Panc1 (cell line): ENCODE measurements at regions of chr12 and their contacts with region 1.

Region 1: GRCh38 chr12:70664465-70664881 is 27.2 kb upstream of the PTPRB start:
- DNase-seq: no peak
- ATAC-seq: no peak
- H3K4me3 ChIP-seq: no peak overlapping the region
- H3K27ac ChIP-seq: no peak overlapping the region
- H3K4me1 ChIP-seq: no peaks in the 10 kb centered on the region; the same call in 1 of the 2 replicates
- H3K27me3 ChIP-seq: no peaks in the 10 kb centered on the region
- CTCF ChIP-seq: no peak

Region 2: DNA sequence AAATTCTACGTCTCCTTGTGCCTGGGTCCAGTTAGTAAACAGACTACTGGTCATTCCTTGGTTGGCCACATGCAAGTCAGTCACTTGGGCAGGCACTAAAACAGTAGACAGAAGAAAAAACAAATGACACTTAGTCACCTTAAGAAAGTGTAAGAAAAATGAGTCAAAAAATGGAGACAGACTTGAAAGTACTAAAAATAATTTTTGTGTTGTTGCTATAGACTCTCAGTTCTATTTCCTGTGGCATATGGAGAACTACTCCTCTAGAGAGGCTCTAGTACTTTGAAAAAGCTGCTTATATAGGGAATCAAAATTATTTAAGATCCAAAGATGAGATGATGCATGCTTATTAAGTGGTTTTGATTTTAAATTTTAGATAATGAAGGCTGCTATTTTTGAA is 83.3 kb before region 1 on chr12:
- CTCF ChIA-PET with region 1: no interaction called
- POLR2A ChIA-PET with region 1: no interaction called
- in situ Hi-C with region 1: no loop called
- intact Hi-C with region 1: no loop called
- DNase-seq: no peak
- ATAC-seq: no peak
- H3K4me3 ChIP-seq: no peak overlapping the region
- H3K27ac ChIP-seq: no peak overlapping the region
- H3K4me1 ChIP-seq: no peaks in the 10 kb centered on the region
- H3K27me3 ChIP-seq: no peaks in the 10 kb centered on the region
- CTCF ChIP-seq: no peak

Region 3: DNA sequence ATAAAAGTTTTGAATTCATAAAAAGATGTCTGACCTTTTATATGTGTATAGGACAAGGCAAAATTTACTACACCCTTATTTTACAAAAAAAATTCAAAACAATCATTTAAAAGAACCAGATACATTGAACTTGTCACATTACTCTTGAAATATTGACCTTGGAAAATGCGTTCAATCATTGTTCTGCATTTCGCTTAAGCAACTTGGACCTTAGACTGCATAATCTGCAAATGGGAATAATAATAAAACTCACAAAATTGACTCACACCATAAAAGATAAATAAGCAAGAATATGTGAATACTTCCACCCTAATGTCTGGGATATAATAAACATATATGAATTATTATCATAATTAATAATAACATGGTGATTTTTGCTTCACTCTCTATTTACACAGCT is 42.1 kb after region 1 on chr12:
- CTCF ChIA-PET with region 1: no interaction called
- POLR2A ChIA-PET with region 1: no interaction called
- in situ Hi-C with region 1: no loop called
- intact Hi-C with region 1: loop called (anchors 2 kb)
- DNase-seq: no peak
- ATAC-seq: no peak
- H3K4me3 ChIP-seq: no peak overlapping the region
- H3K27ac ChIP-seq: no peak overlapping the region
- H3K4me1 ChIP-seq: no peaks in the 10 kb centered on the region
- H3K27me3 ChIP-seq: peaks cover 4% of the 10 kb centered on the region
- CTCF ChIP-seq: no peak